Testis (tissue), 5 donors: ENCODE measurements at regions of chr1 and their contacts with region 1.

Region 1: GRCh38 chr1:179190861-179191260 is 38.6 kb downstream of the ABL2 start:
- DNase-seq: no peak
- H3K4me3 ChIP-seq: no peak overlapping the region
- H3K27ac ChIP-seq: no peak overlapping the region
- H3K4me1 ChIP-seq: no peaks in the 10 kb centered on the region
- H3K27me3 ChIP-seq: no peaks in the 10 kb centered on the region
- CTCF ChIP-seq: no peak
- POLR2A ChIP-seq: no peak

Region 2: DNA sequence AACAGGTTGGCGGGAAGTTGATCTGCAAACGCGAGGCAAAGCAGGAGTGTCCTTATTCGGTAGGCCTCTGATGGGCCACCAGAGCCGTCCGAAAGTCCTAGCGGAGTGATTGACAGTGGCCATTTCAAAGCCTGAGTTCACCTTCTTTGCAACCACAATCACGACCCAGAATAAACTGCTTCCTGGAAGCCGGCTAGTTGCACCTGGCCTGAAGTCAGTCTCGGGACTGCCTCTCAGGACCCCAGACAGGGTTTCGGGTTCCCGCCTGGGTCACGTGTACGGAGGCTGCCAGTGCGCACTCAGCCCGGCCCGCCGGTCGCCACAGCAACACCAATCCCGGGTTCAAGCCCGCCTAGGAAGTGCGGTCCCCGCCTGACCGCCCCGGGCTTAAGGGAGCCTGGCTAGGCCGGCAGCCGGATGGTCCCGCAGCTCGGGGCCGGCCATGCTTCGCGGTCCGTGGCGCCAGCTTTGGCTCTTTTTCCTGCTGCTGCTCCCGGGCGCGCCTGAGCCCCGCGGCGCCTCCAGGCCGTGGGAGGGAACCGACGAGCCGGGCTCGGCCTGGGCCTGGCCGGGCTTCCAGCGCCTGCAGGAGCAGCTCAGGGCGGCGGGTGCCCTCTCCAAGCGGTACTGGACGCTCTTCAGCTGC is 109.1 kb before region 1 on chr1 and contains the start of gene TOR3A:
- intact Hi-C with region 1: loop called (anchors 10 kb)
- DNase-seq: peak; percentile 95
- H3K4me3 ChIP-seq: peak within 1 kb of the TSS; percentile 61 to 79
- H3K27ac ChIP-seq: peak within 1 kb of the TSS; percentile 14 to 69
- H3K4me1 ChIP-seq: peaks cover 13% of the 10 kb centered on the region
- H3K27me3 ChIP-seq: no peaks in the 10 kb centered on the region
- CTCF ChIP-seq: no peak
- POLR2A ChIP-seq: peak; percentile 16
- total RNA-seq, gene TOR3A: 16.3 to 17.6 TPM